Tibial artery (tissue), 4 donors: ENCODE measurements at regions of chr5 and their contacts with region 1.

Region 1: DNA sequence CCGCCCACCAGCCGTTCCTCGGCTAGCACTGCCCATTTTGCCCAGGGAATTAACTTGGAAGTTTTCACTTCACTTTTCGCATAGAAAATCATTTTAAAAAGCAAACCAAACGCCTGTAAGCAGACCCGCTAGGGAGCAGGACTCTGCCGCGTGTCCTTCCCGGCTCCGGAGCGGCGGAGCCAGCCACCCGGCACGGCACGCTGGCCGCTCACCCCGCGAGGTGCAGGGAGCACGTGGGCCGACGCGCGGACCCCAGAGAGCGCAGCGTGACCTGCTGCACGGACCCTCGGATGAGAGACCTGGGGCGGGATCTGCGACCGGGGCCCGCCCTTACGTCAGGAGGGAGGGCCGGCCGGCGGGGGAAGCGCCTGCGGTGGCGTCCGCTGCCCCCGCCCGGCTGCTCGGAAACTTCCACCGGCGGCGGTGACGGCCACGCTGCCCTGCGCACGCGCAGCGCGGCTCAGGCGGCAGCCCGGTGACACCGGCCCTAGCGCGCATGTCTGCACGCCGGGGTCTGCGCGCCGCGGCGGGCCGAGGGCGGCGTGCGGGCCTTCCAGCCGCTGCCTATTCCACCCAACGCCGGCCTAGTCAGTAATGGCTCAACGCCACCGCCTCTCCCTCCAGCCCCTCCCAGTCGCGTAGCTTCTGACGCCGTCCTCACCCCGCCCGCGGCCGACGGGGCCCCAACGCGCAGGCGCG is 506 bp upstream of the TENT4A start:
- DNase-seq: peak; percentile 95 to 98
- H3K4me3 ChIP-seq: peak overlapping the region; percentile 79 to 80
- H3K27ac ChIP-seq: peak overlapping the region; percentile 84 to 97
- H3K4me1 ChIP-seq: peaks cover 0 to 39% (median 38%) of the 10 kb centered on the region in 4 donors
- H3K27me3 ChIP-seq: no peaks in the 10 kb centered on the region
- CTCF ChIP-seq: peak in 1 of 2 experiments; percentile 20

Region 2: DNA sequence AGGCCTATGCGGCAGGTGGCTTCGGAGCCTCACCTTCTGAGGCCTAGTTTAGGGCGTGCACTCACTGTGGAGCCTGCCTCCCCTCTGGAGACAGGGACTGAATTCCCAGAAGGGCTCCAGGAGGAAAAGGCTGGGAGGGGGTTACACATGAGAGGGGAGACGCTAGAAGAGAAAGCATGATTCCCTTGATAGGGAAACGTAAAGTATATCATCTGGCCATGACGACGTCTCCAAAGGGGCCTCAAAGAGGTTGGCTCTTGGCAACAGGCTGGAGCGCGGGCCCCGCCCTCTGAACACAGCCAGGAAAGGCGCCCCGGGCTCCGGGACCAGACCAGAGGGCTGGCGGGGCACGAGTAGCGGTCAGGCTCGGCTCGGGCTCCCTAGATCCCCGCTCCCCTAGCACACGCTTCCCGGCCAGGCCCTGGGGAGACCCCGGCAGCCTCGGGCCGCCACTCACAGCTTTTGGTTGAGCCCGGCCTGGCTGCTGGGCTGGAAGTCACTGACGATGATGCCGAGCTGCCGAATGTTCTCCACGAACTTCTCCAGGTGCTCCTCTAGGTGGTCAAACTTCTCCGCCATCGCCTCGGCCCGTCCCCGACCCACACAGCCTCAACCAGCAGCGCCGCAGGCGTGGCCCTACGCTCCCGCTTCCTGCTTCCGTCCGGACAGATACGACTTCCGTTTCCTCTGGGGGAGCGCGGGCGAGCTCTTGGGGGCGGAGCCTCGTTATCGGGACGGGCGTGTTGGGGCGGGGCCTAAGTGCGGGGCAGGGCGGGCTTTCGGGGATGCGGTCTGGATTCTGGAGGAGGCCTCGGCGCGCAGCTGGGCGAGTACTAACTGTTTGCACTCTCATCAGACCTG is 334.6 kb before region 1 on chr5 and contains the start of gene MED10:
- intact Hi-C with region 1: loop called (anchors 2 kb)
- DNase-seq: peak; percentile 93 to 98
- H3K4me3 ChIP-seq: peak within 1 kb of the TSS; percentile 94 to 99
- H3K27ac ChIP-seq: peak within 1 kb of the TSS; percentile 90 to 91
- H3K4me1 ChIP-seq: peaks cover 0 to 19% (median 16%) of the 10 kb centered on the region in 4 donors
- H3K27me3 ChIP-seq: no peaks in the 10 kb centered on the region
- CTCF ChIP-seq: no peak